ENCODE measurements at regions of chr14 and their contacts with region 1.

Region 1: GRCh38 chr14:59103396-59103795 is 85.1 kb upstream of the DAAM1 start:
- DNase-seq: no peak

Region 2: GRCh38 chr14:58152014-58152857 is 951.2 kb before region 1 on chr14 and contains the start of gene ARMH4:
- intact Hi-C with region 1: loop called in 1 of 2 experiments (anchors 5 kb)
- DNase-seq: peak; percentile 92
- total RNA-seq, gene ARMH4: 8.5 to 9.2 TPM

Region 3: DNA sequence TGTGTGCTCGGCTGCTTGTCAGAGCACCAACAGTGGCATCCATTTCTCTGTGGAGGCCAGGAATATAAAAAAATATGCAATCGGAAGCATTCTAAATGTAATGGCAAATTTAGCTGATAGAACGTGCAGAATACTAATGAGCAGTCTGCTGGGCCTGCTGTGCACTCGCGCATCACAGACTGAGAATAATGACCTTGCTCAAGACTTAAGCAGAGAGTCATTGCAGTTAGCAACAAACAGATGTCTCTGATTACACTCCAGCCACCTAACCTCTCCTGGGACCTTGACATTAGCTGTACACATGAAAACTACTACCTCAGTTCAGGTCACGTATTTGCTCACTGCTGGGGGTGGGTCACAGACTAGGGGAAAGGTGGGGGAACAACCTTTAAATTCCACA is 184.2 kb before region 1 on chr14:
- intact Hi-C with region 1: no loop called
- DNase-seq: no peak